Left ventricle myocardium superior (tissue), 1 donor: ENCODE measurements at regions of chr5 and their contacts with region 1.

Region 1: GRCh38 chr5:140073296-140073695 is 30.2 kb upstream of the NRG2 start:
- DNase-seq: no peak
- ATAC-seq: no peak

Region 2: GRCh38 chr5:140157032-140157803 is 83.9 kb after region 1 on chr5:
- intact Hi-C with region 1: loop called (anchors 5 kb)
- DNase-seq: peak; percentile 93
- ATAC-seq: peak; percentile 96

Region 3: DNA sequence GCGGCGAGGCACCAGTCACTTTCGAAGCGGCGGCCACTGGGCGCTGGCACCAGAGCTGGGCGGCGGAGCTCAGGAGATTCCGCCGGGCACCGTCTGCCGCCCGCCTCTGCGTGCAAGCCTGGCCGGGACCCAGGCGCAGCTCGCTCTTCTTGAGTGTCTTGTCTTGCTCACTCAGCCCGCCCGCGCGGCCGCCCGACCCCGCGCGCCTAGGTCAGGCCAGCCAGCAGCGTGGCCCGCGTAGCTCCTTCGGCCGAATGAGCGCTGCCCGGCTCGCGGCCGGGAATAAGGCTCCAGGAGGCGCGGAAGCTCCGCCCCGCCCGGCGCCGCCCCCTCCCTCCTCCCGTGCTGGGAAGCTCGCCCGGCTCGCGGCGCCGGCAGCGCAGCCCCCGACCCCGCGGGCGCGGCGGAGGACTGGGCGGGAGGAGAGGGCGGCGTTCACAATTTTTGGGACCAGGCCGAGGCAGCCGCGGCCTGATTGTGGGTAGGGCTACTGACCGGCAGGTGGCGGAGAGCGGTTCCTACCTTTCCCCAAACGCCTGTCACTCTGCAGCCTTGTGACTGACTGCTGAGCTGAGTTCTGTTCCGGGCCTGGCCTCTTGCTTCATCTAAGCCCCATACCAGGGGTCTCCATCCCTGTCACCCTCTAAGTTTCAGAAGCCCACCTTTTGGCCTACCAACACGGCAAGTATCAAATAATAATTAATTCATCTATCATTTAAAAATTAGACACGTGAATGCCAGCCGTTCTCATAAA is 273.2 kb after region 1 on chr5 and contains the start of gene HBEGF:
- intact Hi-C with region 1: no loop called
- DNase-seq: peak; percentile 92
- ATAC-seq: peak; percentile 84
- total RNA-seq, gene HBEGF: 21.9 TPM